ENCODE measurements at regions of chr19 and their contacts with region 1.

Region 1: GRCh38 chr19:51473009-51473707 is 5.2 kb upstream of the CEACAM18 start:
- DNase-seq: peak; percentile 73
- CTCF ChIP-seq: peak; percentile 83

Region 2: GRCh38 chr19:51240866-51241265 is 232.3 kb before region 1 on chr19:
- CTCF ChIA-PET with region 1: no interaction called
- POLR2A ChIA-PET with region 1: no interaction called
- DNase-seq: no peak
- CTCF ChIP-seq: no peak

Region 3: DNA sequence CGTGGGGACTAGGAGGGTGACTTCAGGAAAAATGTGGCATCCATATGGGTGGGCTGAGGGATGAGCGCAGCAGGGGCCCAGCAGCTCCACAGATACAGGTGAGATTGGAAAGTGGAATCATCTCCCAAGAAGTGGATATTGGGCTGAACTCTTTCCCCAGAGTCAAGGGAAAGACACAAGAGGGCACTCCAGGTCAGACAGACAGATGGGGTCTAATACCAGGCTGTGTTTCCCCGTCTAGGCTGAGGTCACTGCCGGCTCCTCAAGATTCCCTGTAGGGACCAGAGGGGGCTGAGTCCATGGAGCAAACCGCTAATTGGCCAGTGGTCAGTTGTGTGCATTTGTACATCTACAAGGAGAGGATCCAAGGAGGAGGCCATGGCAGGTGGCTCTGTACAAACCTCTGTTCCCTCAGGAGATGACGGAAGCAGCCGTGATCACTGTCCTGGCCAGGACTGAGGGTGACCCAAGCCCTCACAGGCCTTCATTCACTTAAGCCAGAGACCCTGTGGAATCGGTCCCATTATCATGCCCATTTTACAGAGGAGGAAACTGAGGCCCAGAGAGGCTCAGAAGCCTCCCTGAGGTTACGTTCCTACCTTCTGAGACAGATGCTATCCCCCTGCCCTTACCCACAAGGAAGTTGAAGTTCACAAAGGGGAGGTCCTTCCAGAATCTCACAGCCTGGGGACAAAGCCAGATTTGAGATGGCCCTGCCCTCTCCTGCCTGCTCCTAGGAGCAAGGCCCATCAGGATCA is 176.6 kb before region 1 on chr19:
- CTCF ChIA-PET with region 1: no interaction called
- POLR2A ChIA-PET with region 1: no interaction called
- DNase-seq: no peak
- CTCF ChIP-seq: peak; percentile 17

Region 4: DNA sequence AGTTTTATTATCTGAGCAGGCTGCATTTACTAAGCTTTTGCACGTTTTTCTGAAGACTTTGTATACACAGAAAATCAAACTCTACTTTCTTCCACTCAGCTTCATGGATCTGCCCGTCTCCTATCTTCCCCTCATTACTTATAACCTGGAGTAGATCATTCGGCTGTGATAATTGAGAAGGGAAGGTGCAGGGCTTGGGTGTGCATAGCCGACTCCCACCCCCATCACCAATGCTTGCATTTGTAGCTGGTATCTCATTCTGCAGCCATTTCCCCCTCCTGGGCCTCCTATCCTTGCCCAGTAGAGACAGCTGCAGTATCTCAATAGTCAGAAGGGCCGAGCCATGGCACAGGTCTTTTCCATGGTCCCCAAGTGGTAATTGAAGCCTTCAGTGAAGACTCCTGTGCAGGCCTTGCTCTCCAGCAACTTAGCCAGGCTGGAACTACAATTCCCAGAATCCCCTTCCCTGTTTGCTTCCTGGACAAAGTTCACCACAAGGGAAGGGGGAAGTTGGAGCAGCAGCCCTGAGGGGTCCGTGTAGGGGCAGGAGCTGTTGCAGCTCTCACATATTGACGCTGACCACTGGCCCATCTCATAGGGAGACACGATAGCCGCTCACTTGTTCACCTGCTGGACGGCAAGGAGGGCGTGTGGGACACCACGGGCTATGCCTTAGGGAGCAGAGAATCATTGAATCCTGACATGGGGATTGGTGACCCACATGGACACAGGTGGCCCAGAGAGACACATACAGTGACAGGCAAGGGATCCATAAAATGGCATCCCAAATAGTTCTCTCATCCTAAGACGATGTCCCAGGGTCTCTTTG is 12.8 kb before region 1 on chr19:
- CTCF ChIA-PET with region 1: interaction called, 26 read pairs
- POLR2A ChIA-PET with region 1: no interaction called
- DNase-seq: no peak
- CTCF ChIP-seq: no peak

Region 5: DNA sequence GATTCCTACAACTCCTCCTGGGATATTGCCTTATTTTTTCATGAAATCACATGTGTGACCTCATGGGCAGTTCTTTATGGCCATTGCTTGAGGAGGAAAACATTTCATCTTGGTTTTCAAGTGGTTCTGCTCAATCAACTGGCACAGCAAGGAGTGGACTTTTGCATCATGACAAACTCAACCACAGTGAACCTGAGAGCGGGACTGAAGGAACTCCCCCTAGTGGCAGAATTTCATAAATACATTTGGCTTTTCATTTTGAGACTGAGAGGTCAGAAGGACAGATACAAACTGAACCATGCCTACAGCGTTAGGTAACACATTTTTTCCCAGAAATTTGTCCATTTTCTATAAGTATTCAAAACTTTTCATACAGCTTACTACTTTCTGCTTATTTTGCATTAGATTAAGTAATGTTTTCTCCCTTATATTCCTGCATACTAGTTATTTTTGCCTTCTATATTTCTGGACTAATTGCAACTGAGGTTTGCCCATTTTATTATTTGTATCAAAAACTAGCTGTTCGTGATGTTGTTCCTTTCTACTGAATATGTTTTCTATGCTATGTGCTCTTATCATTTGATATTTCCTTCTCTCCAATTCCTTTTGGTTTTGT is 41.8 kb after region 1 on chr19:
- CTCF ChIA-PET with region 1: interaction called, 23 read pairs
- POLR2A ChIA-PET with region 1: no interaction called
- DNase-seq: peak; percentile 63
- CTCF ChIP-seq: peak; percentile 67

Region 6: GRCh38 chr19:51637362-51637978 is 164.3 kb after region 1 on chr19:
- CTCF ChIA-PET with region 1: interaction called, 10 read pairs
- POLR2A ChIA-PET with region 1: no interaction called
- DNase-seq: no peak
- CTCF ChIP-seq: peak; percentile 49

Region 7: GRCh38 chr19:51651216-51651846 is 178.2 kb after region 1 on chr19:
- CTCF ChIA-PET with region 1: interaction called, 31 read pairs
- POLR2A ChIA-PET with region 1: no interaction called
- DNase-seq: peak; percentile 62
- CTCF ChIP-seq: no peak

Measured in GM10248 (cell line).